CD8-positive, alpha-beta memory T cell (primary cell): ENCODE measurements at regions of chr1 and their contacts with region 1.

Region 1: DNA sequence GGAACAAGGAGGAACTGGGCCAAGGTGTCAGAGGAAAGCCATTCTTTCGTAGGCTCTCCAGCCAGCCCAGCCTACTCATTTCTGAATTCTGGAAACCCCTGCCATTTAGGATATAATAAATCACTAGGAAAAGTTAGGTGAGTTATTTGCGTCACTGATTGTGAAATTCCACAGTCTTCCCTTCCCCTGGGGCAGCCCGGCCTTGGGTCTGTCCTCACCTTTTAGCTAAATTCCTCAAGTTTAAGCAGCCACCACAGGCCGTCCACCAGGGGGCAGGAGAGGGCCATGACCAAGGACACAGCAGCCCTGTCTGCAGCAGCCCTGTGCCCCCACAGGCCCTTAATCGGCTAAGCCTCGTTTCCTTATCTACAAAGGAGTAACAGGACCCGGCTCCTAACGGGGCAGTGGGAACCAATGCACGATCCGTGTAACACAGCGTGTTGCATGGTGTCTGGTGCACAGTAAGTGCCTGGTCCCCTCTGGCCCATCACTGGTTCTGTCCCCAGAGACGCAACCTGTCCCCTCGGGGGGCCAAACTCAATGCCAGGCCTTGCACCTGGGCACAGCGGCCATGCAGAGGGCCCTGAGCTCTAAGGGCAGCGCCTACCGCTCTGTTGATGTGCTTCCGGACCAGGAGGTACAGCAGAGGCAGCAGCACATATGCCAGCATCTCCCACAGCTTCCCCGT is 18.1 kb downstream of the GPR157 start:
- DNase-seq: peak; percentile 64 to 87 (median 70)
- H3K4me3 ChIP-seq: no peak overlapping the region
- H3K4me3 Mint-ChIP-seq: no peak overlapping the region
- H3K27ac ChIP-seq: no peak overlapping the region
- H3K27ac Mint-ChIP-seq: peak overlapping the region in 1 of 8 donors; percentile 57
- H3K4me1 ChIP-seq: no peaks in the 10 kb centered on the region
- H3K4me1 Mint-ChIP-seq: peaks cover 0 to 5% (median 3%) of the 10 kb centered on the region in 3 donors
- H3K27me3 ChIP-seq: no peaks in the 10 kb centered on the region
- H3K27me3 Mint-ChIP-seq: no peaks in the 10 kb centered on the region

Region 2: DNA sequence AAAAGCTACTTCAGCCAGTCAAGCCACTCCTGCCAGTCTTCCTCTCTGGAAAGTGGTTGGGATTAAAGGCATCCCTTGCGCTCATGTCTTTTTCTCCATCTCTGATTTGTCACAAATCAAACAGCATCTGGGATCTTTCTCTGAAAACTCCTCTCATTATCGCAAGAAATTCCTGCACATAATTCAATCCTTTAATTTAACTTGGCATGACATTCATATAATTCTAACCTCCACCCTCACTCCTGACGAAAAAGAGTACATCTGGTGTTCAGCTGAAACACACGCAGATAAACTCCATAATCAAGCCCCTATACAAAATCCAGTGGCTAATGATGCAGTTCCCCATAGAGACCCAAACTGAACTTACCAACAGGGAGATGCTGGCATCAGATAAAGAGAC is 22.0 kb before region 1 on chr1:
- CTCF ChIA-PET with region 1: no interaction called
- POLR2A ChIA-PET with region 1: no interaction called
- DNase-seq: no peak
- H3K4me3 ChIP-seq: no peak overlapping the region
- H3K4me3 Mint-ChIP-seq: no peak overlapping the region
- H3K27ac ChIP-seq: no peak overlapping the region
- H3K27ac Mint-ChIP-seq: no peak overlapping the region
- H3K4me1 ChIP-seq: no peaks in the 10 kb centered on the region
- H3K4me1 Mint-ChIP-seq: no peaks in the 10 kb centered on the region
- H3K27me3 ChIP-seq: peaks cover 4% of the 10 kb centered on the region
- H3K27me3 Mint-ChIP-seq: peaks cover 15 to 20% of the 10 kb centered on the region in 2 donors

Region 3: DNA sequence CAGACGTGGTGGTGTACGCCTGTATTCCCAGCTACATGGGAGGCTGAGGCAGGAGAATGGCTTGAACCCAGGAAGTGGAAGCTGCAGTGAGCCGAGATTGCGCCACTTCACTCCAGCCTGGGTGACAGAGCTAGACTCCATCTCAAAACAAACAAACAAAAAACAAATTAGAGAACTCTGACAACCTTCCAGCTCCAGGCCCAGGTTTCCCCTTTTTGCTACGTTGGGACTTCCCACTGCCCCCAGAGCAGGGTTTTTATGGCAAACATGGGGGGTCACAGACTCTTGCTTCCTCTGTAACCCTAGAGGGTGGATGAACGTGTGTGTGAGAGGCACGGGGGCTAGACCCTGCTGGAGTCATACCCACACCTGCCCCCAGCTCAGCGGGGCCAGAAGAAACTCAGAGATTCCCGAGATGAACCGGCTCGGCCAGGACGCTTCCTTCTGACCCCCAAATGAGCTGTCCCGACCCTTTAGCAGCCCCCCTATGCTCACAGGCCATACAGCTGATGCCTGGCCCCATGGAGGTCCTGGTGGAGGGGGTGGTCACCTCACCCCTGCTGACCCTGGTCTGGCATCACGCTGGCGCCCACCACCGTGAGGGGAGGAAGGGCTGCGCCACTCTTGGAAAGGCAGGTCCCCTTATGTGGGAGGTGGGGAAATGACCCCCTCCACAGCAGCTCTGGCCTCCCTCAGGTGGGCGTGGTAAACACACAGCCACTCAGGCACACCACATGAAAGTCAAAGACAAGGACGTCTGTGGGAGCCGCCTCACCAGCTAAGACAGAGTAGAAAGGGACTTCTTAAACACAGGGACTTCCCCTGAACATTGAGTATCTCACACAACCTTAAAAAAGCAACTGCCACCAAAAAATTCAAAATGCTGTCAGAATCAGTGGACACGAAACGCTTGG is 10.9 kb after region 1 on chr1:
- CTCF ChIA-PET with region 1: interaction called, 21 read pairs
- POLR2A ChIA-PET with region 1: no interaction called
- DNase-seq: peak in 3 of 5 donors; percentile 37 to 62 (median 61)
- H3K4me3 ChIP-seq: no peak overlapping the region
- H3K4me3 Mint-ChIP-seq: peak overlapping the region in 6 of 7 donors; percentile 27 to 63 (median 38)
- H3K27ac ChIP-seq: no peak overlapping the region
- H3K27ac Mint-ChIP-seq: peak overlapping the region in 6 of 8 donors; percentile 19 to 68 (median 40)
- H3K4me1 ChIP-seq: peaks cover 18% of the 10 kb centered on the region
- H3K4me1 Mint-ChIP-seq: peaks cover 17 to 44% (median 34%) of the 10 kb centered on the region in 3 donors
- H3K27me3 ChIP-seq: no peaks in the 10 kb centered on the region
- H3K27me3 Mint-ChIP-seq: no peaks in the 10 kb centered on the region

Region 4: DNA sequence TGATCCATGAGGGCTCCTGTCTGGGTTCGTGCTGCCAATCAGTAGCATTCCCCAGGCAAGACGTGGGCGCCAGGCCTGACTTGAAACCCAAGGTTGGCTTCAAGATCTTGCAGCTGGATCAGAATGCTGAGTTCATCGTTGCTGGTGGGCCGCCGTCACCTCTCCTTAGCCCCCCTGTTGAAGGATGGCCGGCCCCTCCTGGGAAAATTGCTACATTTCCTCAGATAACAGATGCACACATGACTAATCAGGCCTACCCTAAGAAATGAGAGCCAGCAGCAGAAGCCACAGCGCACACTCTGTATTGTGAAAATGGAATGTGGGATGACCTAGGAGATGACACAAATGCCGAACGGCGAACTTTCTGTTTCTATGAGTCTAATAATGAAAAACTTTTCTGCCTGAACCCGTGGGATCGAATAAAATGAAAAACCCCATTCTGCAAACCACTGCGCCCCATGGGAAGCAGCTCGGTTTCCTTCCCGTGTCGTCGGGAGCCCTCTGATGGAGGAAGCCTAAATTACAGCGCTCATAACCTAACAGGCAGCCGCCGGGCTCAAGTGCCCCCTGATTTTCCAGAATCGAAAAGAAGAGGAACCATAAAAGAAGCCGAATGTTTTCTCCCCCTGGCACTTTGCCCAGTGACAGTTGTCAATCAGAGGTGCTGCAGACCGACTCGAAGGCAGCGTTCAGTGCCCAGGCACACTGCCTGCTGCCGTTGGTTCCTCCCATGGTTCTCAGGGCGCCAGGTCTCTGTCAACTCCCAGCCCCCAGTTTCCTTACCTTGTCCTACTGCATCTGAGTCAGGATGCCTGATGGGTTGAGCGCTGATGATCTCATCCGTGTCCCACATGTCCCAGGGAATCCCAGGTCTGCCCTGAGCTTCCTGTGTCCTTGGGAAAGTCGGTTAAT is 85.6 kb after region 1 on chr1:
- CTCF ChIA-PET with region 1: interaction called, 13 read pairs
- POLR2A ChIA-PET with region 1: no interaction called
- DNase-seq: peak; percentile 21 to 54 (median 25)
- H3K4me3 ChIP-seq: no peak overlapping the region
- H3K4me3 Mint-ChIP-seq: peak overlapping the region in 1 of 7 donors; percentile 76
- H3K27ac ChIP-seq: no peak overlapping the region
- H3K27ac Mint-ChIP-seq: no peak overlapping the region
- H3K4me1 ChIP-seq: peaks cover 4% of the 10 kb centered on the region
- H3K4me1 Mint-ChIP-seq: peaks cover 10 to 22% (median 12%) of the 10 kb centered on the region in 3 donors
- H3K27me3 ChIP-seq: peaks cover 22% of the 10 kb centered on the region
- H3K27me3 Mint-ChIP-seq: peaks cover 27 to 69% of the 10 kb centered on the region in 2 donors